Caco-2 (cell line): ENCODE measurements at regions of chr3 and their contacts with region 1.

Region 1: DNA sequence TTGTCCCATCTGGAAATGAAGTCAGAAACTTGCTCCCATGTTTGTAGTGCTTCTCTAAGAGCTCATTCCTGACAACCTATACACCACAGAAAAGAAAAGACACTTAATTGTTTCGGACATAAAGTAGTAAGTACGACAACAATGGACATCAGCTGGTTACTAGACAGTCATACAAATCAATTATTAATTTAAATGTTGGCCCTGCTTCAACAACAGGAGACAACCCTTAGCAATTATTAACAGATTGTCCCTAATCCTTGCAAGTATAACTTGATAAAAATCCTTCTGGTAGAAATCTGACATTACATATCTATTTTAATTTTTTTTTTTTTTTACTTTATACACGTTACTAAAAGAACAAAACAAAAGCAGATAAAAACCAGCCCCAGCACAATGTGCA is 29.8 kb downstream of the ERICH6 start:
- DNase-seq: no peak
- H3K4me3 ChIP-seq: no peak overlapping the region
- H3K4me3 Mint-ChIP-seq: no peak overlapping the region
- H3K27ac Mint-ChIP-seq: no peak overlapping the region
- H3K4me1 ChIP-seq: no peaks in the 10 kb centered on the region
- H3K4me1 Mint-ChIP-seq: no peaks in the 10 kb centered on the region
- H3K27me3 ChIP-seq: no peaks in the 10 kb centered on the region
- H3K27me3 Mint-ChIP-seq: peaks cover 5% of the 10 kb centered on the region
- CTCF ChIP-seq: no peak

Region 2: GRCh38 chr3:150650243-150650642 is 23.7 kb before region 1 on chr3:
- CTCF ChIA-PET with region 1: no interaction called
- POLR2A ChIA-PET with region 1: no interaction called
- intact Hi-C with region 1: no loop called
- DNase-seq: no peak
- H3K4me3 ChIP-seq: no peak overlapping the region
- H3K4me3 Mint-ChIP-seq: no peak overlapping the region
- H3K27ac Mint-ChIP-seq: no peak overlapping the region
- H3K4me1 ChIP-seq: no peaks in the 10 kb centered on the region
- H3K4me1 Mint-ChIP-seq: no peaks in the 10 kb centered on the region
- H3K27me3 ChIP-seq: no peaks in the 10 kb centered on the region
- H3K27me3 Mint-ChIP-seq: peaks cover 9% of the 10 kb centered on the region
- CTCF ChIP-seq: no peak

Region 3: DNA sequence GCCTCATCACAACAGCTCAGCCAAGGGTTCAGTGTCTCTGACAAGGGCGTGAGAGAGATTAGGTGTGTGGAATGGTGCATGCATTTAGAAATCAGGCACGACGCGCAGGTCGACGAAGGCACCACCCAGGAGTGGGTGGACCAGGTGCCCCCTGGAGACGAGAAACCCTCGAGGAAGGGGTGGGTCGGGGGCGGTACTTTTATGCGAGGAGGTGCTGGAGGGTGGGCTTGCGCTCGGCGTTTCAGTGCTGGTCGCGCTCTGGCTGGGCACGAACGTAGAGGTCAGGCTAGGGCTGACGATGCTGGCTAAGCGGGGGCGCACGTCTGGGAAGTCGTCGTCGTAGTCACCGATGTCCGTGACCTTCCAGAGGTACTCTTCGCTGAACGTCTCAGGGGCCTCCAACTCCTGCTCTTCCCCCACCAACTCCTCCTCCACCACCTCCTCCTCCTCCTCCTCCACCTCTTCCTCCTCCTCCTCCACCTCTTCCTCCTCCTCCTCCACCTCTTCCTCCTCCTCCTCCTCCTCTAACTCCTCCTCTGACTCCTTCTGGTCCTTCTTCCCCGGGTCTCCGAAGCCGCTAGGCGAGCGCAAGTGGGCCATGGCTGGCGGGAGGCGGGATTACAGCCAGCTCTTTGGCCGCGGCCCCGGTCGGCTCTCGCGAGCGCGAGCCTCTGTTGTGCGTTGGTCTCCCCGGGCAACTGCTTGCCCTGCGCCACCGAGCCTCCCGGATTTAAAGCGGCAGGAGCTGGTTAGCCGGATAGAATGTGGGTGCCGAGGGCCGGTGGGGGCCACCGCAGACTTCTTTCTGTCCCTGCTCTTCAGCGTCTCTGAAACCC is 29.6 kb after region 1 on chr3 and contains the start of gene ERICH6:
- CTCF ChIA-PET with region 1: interaction called, 11 read pairs
- POLR2A ChIA-PET with region 1: no interaction called
- intact Hi-C with region 1: no loop called
- DNase-seq: peak; percentile 90 to 93
- H3K4me3 ChIP-seq: peak within 1 kb of the TSS; percentile 52
- H3K4me3 Mint-ChIP-seq: peak within 1 kb of the TSS; percentile 95
- H3K27ac Mint-ChIP-seq: peak within 1 kb of the TSS; percentile 96
- H3K4me1 ChIP-seq: no peaks in the 10 kb centered on the region
- H3K4me1 Mint-ChIP-seq: no peaks in the 10 kb centered on the region
- H3K27me3 ChIP-seq: no peaks in the 10 kb centered on the region
- H3K27me3 Mint-ChIP-seq: peaks cover 3% of the 10 kb centered on the region
- CTCF ChIP-seq: no peak
- total RNA-seq, gene ERICH6: not detected in 2 replicates